ENCODE measurements at regions of chr1 and their contacts with region 1.

Region 1: DNA sequence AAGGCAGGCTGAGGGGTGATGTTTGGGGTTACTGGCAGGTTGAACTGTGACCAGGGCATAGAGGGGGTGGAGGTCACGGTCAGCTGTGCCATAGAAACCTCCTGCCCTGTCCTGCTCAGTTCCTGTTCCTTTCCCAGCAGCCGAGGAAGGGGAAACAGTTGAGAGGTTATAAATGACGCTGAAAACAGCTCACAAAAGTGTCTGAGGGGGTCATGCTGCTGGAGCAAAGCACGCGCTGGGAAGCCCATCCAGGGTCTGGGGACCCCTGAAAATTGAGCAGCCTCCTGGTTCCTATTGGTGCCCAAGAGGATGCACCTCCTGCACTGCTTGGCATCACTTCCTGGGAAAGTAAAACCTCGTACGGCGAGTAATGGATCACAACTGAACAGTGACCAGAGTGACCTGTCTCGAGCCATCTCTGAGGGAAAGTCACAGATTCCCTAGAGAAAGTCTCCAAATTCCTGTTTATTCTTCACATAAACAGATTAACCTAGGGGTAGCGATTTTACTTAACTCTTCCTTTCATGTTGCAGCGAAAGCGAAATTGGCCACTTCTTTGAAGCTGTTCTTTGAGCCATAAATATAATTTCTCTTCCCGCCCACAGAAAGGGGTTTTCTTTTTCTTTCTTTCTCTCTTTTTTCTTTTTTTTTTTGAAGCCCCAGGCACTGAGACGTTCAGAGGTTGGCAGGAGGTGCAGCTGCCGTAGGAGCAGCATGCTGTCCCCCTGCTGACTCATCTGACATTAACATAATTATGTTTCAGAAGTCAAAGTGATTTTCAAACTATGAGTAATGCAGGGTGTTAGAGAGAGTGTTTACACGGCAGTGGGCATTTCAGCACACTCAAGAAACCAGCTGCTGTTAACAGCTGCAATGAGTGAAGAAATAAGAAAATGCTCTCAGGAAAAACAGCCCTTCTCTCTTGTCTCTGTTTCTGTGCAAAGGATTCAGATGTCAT is 41.8 kb upstream of the ATF3 start:
- DNase-seq: peak; percentile 81
- ATAC-seq: peak; percentile 97
- H3K4me3 Mint-ChIP-seq: peak overlapping the region; percentile 77
- H3K27ac Mint-ChIP-seq: peak overlapping the region; percentile 91
- H3K4me1 Mint-ChIP-seq: peaks cover 33% of the 10 kb centered on the region
- H3K27me3 Mint-ChIP-seq: peaks cover 2% of the 10 kb centered on the region

Region 2: GRCh38 chr1:212477014-212477679 is 89.7 kb before region 1 on chr1:
- CTCF ChIA-PET with region 1: interaction called, 12 read pairs
- POLR2A ChIA-PET with region 1: interaction called, 3 read pairs
- intact Hi-C with region 1: loop called in 1 of 2 experiments (anchors 1 kb)
- DNase-seq: peak; percentile 87
- ATAC-seq: peak; percentile 93
- H3K4me3 Mint-ChIP-seq: no peak overlapping the region
- H3K27ac Mint-ChIP-seq: no peak overlapping the region
- H3K4me1 Mint-ChIP-seq: peaks cover 11% of the 10 kb centered on the region
- H3K27me3 Mint-ChIP-seq: peaks cover 2% of the 10 kb centered on the region

Region 3: GRCh38 chr1:212608209-212608955 is 41.6 kb after region 1 on chr1 and contains the start of gene ATF3:
- CTCF ChIA-PET with region 1: interaction called, 4 read pairs
- POLR2A ChIA-PET with region 1: interaction called, 9 read pairs
- intact Hi-C with region 1: loop called (anchors 1 kb)
- DNase-seq: peak; percentile 97
- ATAC-seq: peak; percentile 89
- H3K4me3 Mint-ChIP-seq: peak within 1 kb of the TSS; percentile 91
- H3K27ac Mint-ChIP-seq: peak within 1 kb of the TSS; percentile 96
- H3K4me1 Mint-ChIP-seq: peaks cover 56% of the 10 kb centered on the region
- H3K27me3 Mint-ChIP-seq: peaks cover 45% of the 10 kb centered on the region
- total RNA-seq, gene ATF3: 40.3 to 44.9 TPM

Region 4: GRCh38 chr1:212774584-212774983 is 207.8 kb after region 1 on chr1:
- CTCF ChIA-PET with region 1: no interaction called
- POLR2A ChIA-PET with region 1: no interaction called
- intact Hi-C with region 1: loop called in 1 of 2 experiments (anchors 5 kb)
- DNase-seq: no peak
- ATAC-seq: peak; percentile 17
- H3K4me3 Mint-ChIP-seq: no peak overlapping the region
- H3K27ac Mint-ChIP-seq: no peak overlapping the region
- H3K4me1 Mint-ChIP-seq: peaks cover 38% of the 10 kb centered on the region
- H3K27me3 Mint-ChIP-seq: no peaks in the 10 kb centered on the region

Region 5: DNA sequence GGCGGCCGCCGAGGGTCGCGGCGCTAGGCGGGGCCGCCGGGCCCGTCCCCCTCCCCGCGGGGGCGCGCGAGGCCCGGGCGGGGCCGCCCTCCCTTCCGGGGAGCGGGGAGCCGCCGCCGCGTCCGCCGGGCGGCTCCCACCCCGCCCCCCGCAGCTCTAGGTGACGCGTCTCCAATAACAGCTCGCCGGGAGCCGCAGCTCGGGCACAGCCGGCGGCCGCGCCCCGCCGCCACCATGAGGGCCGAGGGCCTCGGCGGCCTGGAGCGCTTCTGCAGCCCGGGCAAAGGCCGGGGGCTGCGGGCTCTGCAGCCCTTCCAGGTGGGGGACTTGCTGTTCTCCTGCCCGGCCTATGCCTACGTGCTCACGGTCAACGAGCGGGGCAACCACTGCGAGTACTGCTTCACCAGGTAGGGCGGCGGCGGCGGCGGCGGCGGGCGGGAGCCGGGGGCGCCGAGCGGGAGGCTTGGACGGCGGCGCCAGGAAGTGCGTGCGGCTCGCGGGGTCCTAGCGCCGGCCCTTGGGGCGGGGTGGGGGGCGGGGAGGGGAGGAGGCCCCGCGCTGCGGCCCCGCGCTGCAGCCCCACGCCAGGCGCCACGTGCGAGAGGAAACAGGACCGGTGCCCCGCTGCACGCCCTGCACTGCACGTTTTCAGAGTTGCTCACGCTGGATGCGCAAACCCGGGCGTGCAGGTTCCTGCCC is 1714.4 kb after region 1 on chr1 and contains the start of gene SMYD2:
- CTCF ChIA-PET with region 1: no interaction called
- POLR2A ChIA-PET with region 1: no interaction called
- intact Hi-C with region 1: loop called in 1 of 2 experiments (anchors 5 kb)
- DNase-seq: peak; percentile 82
- ATAC-seq: peak; percentile 74
- H3K4me3 Mint-ChIP-seq: peak within 1 kb of the TSS; percentile 92
- H3K27ac Mint-ChIP-seq: peak within 1 kb of the TSS; percentile 89
- H3K4me1 Mint-ChIP-seq: peaks cover 37% of the 10 kb centered on the region
- H3K27me3 Mint-ChIP-seq: no peaks in the 10 kb centered on the region
- total RNA-seq, gene SMYD2: 38.2 to 40.1 TPM